HepG2 (cell line): ENCODE measurements at regions of chr2 and their contacts with region 1.

Region 1: DNA sequence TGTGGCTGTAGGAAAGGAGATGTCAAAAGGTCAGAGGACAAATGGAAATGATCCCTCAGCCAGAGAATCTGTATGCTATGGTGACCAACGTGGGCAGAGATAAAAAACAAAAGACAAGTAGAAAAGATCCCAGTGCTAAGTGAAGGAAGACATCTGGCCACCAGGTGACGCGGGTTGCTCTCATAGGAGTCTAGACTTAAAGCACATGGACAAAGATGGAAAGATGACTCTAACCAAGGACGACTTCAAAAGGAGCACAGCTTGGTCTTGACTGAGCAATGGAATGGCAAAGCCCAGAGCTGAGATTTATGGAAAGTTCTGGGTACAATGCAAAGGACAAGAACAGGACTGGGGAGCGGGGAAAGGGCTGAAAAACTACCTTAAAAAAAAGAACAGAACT is 96.8 kb downstream of the CLIP4 start:
- DNase-seq: peak; percentile 39
- ATAC-seq: peak; percentile 71
- H3K4me3 ChIP-seq: no peak overlapping the region
- H3K27ac ChIP-seq: no peak overlapping the region
- H3K4me1 ChIP-seq: no peaks in the 10 kb centered on the region
- H3K27me3 ChIP-seq: peaks cover 0 to 29% of the 10 kb centered on the region in 2 experiments; a peak in 4 of 5 replicates
- CTCF ChIP-seq: peak; percentile 70
- EP300 ChIP-seq: no peak
- POLR2A ChIP-seq: no peak
- RAD21 ChIP-seq: no peak

Region 2: GRCh38 chr2:29238497-29238896 is 26.5 kb after region 1 on chr2:
- CTCF ChIA-PET with region 1: no interaction called
- POLR2A ChIA-PET with region 1: no interaction called
- in situ Hi-C with region 1: no loop called
- intact Hi-C with region 1: no loop called
- DNase-seq: peak; percentile 34
- ATAC-seq: peak; percentile 95
- H3K4me3 ChIP-seq: no peak overlapping the region
- H3K27ac ChIP-seq: no peak overlapping the region
- H3K4me1 ChIP-seq: no peaks in the 10 kb centered on the region
- H3K27me3 ChIP-seq: peaks cover 6 to 50% of the 10 kb centered on the region in 2 experiments; a peak in 4 of 5 replicates
- CTCF ChIP-seq: peak; percentile 70
- EP300 ChIP-seq: no peak
- POLR2A ChIP-seq: no peak
- RAD21 ChIP-seq: no peak

Region 3: GRCh38 chr2:29260151-29260772 is 48.3 kb after region 1 on chr2:
- CTCF ChIA-PET with region 1: no interaction called
- POLR2A ChIA-PET with region 1: no interaction called
- in situ Hi-C with region 1: no loop called
- intact Hi-C with region 1: no loop called
- DNase-seq: no peak
- ATAC-seq: no peak
- H3K4me3 ChIP-seq: no peak overlapping the region
- H3K27ac ChIP-seq: no peak overlapping the region
- H3K4me1 ChIP-seq: no peaks in the 10 kb centered on the region
- H3K27me3 ChIP-seq: peaks cover 1 to 17% of the 10 kb centered on the region in 2 experiments; a peak in 3 of 5 replicates
- CTCF ChIP-seq: no peak
- EP300 ChIP-seq: no peak
- POLR2A ChIP-seq: no peak
- RAD21 ChIP-seq: no peak

Region 4: DNA sequence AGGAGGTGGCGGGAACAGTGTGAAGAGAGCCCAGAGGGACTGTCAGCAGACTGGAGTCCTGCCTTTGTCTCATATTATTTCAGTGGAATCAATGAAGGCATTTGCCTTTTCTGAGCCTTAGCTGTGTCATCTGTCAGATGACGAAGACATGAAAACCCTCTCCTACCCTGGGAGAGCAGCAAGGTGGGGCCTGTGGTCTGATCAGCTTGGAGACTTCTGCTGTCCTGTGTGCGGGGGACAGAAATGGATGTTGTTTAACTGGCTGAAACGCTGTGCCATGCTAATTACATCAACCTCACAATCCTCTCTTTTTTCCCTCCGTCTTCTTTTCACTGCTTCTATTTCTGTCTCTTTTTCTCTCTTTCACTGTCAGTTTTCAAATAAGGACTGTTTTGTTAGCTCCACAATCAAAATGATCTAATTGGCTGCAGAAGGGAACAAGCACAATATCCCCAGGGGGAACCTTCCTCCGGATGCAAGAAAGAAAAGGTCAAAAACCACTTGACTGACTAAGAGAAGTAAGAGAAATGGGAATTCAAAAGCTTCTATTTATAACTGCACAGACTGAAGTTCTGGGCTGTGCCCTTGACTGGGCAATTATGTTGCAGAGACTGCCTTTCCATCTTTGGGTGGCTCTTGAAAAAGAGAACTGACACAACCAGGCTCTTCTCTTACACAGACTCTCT is 243.3 kb after region 1 on chr2:
- CTCF ChIA-PET with region 1: no interaction called
- POLR2A ChIA-PET with region 1: no interaction called
- in situ Hi-C with region 1: no loop called
- intact Hi-C with region 1: no loop called
- DNase-seq: no peak
- ATAC-seq: no peak
- H3K4me3 ChIP-seq: no peak overlapping the region
- H3K27ac ChIP-seq: no peak overlapping the region
- H3K4me1 ChIP-seq: no peaks in the 10 kb centered on the region
- H3K27me3 ChIP-seq: 0 out of 5 replicates have a peak, but pooled peaks cover 1 to 3% of the 10 kb centered on the region in 2 experiments
- CTCF ChIP-seq: no peak
- EP300 ChIP-seq: no peak
- POLR2A ChIP-seq: no peak
- RAD21 ChIP-seq: no peak

Region 5: GRCh38 chr2:29841386-29842004 is 629.5 kb after region 1 on chr2:
- CTCF ChIA-PET with region 1: interaction called, 7 read pairs
- POLR2A ChIA-PET with region 1: no interaction called
- in situ Hi-C with region 1: loop called (anchors 10 kb)
- intact Hi-C with region 1: no loop called
- DNase-seq: peak; percentile 30
- ATAC-seq: peak; percentile 78
- H3K4me3 ChIP-seq: no peak overlapping the region
- H3K27ac ChIP-seq: no peak overlapping the region
- H3K4me1 ChIP-seq: no peaks in the 10 kb centered on the region
- H3K27me3 ChIP-seq: peaks cover 0 to 25% of the 10 kb centered on the region in 2 experiments; a peak in 2 of 5 replicates
- CTCF ChIP-seq: peak; percentile 73
- EP300 ChIP-seq: no peak
- POLR2A ChIP-seq: no peak
- RAD21 ChIP-seq: no peak; the same call in 1 of the 2 replicates

Region 6: DNA sequence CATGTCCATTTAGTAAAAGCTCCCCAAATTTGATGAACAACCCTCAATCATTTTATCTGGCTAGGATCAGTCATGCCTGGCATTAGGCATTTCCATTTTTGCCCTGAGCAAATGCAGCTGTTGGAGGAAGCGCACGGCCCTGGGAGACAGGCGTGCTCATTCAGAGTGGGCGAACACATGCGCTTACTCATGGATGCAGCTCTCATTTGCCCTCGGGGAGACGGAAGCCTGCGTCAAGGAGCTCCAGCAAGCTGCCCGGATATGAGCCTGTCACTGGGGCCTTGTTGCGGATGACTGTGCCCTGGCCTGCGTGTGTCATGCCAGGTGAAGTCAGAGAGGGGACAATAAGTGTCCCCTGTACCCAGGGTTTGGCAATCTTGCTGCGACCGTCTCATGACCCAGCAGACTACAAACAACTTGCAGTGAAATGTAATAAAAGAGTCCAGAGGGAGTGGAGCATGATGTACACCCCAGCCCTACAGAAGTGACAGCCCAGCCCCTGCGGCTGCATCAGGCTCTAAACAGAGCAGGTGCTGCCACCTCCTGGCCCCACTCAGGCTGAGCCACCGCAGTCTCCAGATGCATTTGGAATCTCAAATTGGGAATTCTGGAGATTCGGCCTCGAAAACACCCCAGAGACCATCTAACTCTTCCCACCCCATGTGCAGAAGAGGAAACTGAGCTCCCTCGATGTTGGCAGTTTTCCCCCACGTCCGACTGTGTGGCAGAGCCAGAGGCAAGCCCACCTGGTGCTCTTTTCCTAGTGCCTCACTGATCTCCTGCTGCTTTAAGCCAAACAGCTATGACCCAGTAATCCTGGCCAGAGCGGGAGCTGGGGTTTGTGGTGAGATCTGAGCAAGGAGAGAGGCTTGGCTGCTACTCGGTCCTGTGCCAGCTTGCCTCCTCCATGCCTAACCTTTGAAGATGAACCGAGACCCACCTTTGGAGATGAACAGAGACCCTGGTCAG is 814.4 kb after region 1 on chr2:
- CTCF ChIA-PET with region 1: no interaction called
- POLR2A ChIA-PET with region 1: no interaction called
- in situ Hi-C with region 1: no loop called
- intact Hi-C with region 1: loop called (anchors 2 kb)
- DNase-seq: peak; percentile 13
- ATAC-seq: peak; percentile 98
- H3K4me3 ChIP-seq: no peak overlapping the region
- H3K27ac ChIP-seq: no peak overlapping the region
- H3K4me1 ChIP-seq: no peaks in the 10 kb centered on the region
- H3K27me3 ChIP-seq: peaks cover 2 to 26% of the 10 kb centered on the region in 2 experiments; a peak in 3 of 5 replicates
- CTCF ChIP-seq: peak; percentile 83
- EP300 ChIP-seq: no peak
- POLR2A ChIP-seq: no peak
- RAD21 ChIP-seq: peak; percentile 70

Region 7: DNA sequence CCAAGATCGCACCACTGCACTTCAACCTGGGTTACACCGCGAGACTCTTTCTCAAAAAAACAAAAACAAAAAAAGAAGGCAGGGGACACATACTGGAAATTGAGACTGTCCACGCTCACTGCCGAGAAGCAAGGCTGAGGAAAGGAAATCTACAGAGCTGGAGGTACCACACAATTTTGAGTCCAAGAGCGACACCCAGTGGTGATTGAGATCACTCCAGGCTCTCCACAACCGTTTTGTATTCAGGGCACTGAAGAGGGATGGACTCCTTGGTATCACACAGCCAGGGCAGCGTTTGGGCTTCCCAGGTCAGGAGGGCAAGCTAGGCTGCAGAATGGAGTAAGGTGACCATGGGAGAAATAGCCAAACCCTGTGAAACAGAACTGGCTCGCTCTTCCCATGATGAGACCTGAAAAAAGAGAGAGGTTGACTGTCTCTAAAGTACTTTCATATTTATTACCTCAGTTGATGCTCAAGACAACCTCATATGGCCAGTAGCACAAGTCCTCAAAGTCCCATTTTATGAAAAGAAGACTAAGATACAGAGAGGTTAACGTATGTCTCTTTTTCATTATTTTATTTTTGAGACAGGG is 860.3 kb after region 1 on chr2:
- CTCF ChIA-PET with region 1: interaction called, 7 read pairs
- POLR2A ChIA-PET with region 1: no interaction called
- in situ Hi-C with region 1: loop called (anchors 10 kb)
- intact Hi-C with region 1: loop called (anchors 5 kb)
- DNase-seq: peak; percentile 70
- ATAC-seq: peak; percentile 99
- H3K4me3 ChIP-seq: no peak overlapping the region
- H3K27ac ChIP-seq: no peak overlapping the region
- H3K4me1 ChIP-seq: no peaks in the 10 kb centered on the region
- H3K27me3 ChIP-seq: peaks cover 0 to 18% of the 10 kb centered on the region in 2 experiments; a peak in 2 of 5 replicates
- CTCF ChIP-seq: peak; percentile 91
- EP300 ChIP-seq: no peak
- POLR2A ChIP-seq: no peak
- RAD21 ChIP-seq: no peak; the same call in 1 of the 2 replicates